Breast epithelium (tissue), 4 donors: ENCODE measurements at regions of chr22 and their contacts with region 1.

Region 1: DNA sequence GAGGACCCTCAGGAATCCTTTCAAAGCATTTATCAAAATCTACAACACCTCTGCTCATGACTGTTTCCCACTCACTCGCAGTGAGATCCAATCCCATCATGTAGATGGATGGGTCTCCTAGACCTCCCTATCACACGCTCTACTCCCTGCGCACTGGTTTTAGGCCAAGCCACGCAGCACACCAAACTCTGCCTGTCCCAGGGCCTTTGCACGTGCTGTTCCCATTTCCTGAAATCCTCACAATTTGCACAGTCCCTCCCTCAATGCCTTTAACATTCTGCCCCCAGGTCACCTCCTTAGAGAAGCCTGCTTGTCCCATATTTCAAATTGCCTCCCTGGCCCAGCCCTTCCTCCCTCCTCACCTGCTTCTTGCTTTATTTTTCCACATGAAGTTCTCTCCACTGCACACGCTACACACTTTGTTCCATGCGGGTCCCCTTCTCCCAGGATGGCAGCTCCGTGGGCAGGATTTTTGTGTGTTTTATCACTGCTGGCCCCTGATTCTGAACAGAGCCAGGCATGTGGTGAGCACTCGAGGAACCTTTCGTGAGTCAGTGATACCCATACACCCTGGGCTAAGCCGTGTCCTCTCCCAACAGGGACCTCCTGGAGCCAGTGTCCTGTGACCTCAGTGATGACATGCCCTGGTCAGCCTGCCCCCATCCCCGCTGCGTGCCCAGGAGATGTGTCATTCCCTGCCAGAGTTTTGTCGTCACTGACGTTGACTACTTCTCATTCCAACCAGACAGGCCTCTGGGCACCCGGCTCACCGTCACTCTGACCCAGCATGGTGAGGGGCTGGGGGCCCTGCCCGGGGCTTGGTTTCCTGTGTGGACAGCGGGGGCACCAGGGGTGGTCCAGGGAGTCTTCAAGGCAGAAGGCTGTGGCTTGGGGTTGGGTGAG is 12.2 kb downstream of the CSF2RB start:
- DNase-seq: no peak
- H3K4me3 ChIP-seq: no peak overlapping the region
- H3K27ac ChIP-seq: no peak overlapping the region
- H3K4me1 ChIP-seq: no peaks in the 10 kb centered on the region
- H3K27me3 ChIP-seq: peaks cover 0 to 3% of the 10 kb centered on the region in 2 donors
- CTCF ChIP-seq: no peak
- POLR2A ChIP-seq: no peak

Region 2: GRCh38 chr22:36942556-36943215 is 17.0 kb after region 1 on chr22:
- intact Hi-C with region 1: loop called (anchors 1 kb)
- DNase-seq: no peak
- H3K4me3 ChIP-seq: no peak overlapping the region
- H3K27ac ChIP-seq: no peak overlapping the region
- H3K4me1 ChIP-seq: no peaks in the 10 kb centered on the region
- H3K27me3 ChIP-seq: no peaks in the 10 kb centered on the region
- CTCF ChIP-seq: no peak
- POLR2A ChIP-seq: no peak